ENCODE measurements at regions of chr11 and their contacts with region 1.

Region 1: GRCh38 chr11:70158201-70158600 is 44.9 kb upstream of the FADD start:
- DNase-seq: peak; percentile 82
- ATAC-seq: peak; percentile 95
- H3K4me3 Mint-ChIP-seq: no peak overlapping the region
- H3K27ac Mint-ChIP-seq: no peak overlapping the region
- H3K4me1 Mint-ChIP-seq: 0 out of 2 replicates have a peak, but pooled peaks cover 2% of the 10 kb centered on the region
- H3K27me3 Mint-ChIP-seq: no peaks in the 10 kb centered on the region
- CTCF ChIP-seq: 0 out of 2 replicates have a peak, but pooled peaks have one; percentile 15

Region 2: DNA sequence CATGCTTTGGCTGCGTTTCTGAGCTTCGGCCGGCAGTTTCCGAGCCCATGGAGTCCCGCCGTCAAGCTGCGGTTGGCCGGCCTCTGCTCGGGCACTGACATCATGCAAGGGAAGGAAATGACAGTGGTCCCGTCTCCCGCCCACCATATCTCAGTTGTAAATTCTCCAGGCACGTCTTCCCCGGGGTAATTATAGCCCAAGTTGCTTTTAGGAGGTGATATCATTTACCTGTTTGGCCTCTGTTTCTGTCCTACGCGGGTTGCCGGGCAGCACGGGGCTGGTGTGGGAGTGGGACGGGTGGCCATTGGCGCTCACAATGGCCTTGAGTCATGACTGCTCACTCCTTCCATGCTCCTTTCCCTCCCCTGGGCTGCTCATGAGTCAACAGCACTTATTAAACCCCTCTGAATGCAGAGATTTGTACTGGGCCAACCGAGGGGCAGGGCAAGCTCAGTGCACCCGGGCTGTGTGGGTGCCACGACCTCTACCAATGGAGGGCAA is 84.3 kb before region 1 on chr11:
- CTCF ChIA-PET with region 1: interaction called, 15 read pairs
- POLR2A ChIA-PET with region 1: interaction called, 3 read pairs
- DNase-seq: no peak
- ATAC-seq: peak; percentile 11; the same call in 1 of the 2 replicates
- H3K4me3 Mint-ChIP-seq: no peak overlapping the region
- H3K27ac Mint-ChIP-seq: no peak overlapping the region
- H3K4me1 Mint-ChIP-seq: peaks cover 45% of the 10 kb centered on the region
- H3K27me3 Mint-ChIP-seq: peaks cover 52% of the 10 kb centered on the region
- CTCF ChIP-seq: no peak

Region 3: GRCh38 chr11:70082829-70083228 is 75.4 kb before region 1 on chr11:
- CTCF ChIA-PET with region 1: interaction called, 23 read pairs
- POLR2A ChIA-PET with region 1: no interaction called
- DNase-seq: no peak
- ATAC-seq: no peak
- H3K4me3 Mint-ChIP-seq: no peak overlapping the region
- H3K27ac Mint-ChIP-seq: no peak overlapping the region
- H3K4me1 Mint-ChIP-seq: peaks cover 3% of the 10 kb centered on the region; the same call in 1 of the 2 replicates
- H3K27me3 Mint-ChIP-seq: peaks cover 29% of the 10 kb centered on the region
- CTCF ChIP-seq: no peak

Region 4: GRCh38 chr11:70141486-70142220 is 16.5 kb before region 1 on chr11:
- CTCF ChIA-PET with region 1: interaction called, 30 read pairs
- POLR2A ChIA-PET with region 1: interaction called, 3 read pairs
- DNase-seq: no peak
- ATAC-seq: peak; percentile 41
- H3K4me3 Mint-ChIP-seq: peak overlapping the region; percentile 57
- H3K27ac Mint-ChIP-seq: no peak overlapping the region
- H3K4me1 Mint-ChIP-seq: peaks cover 38% of the 10 kb centered on the region
- H3K27me3 Mint-ChIP-seq: peaks cover 28% of the 10 kb centered on the region
- CTCF ChIP-seq: no peak

Region 5: DNA sequence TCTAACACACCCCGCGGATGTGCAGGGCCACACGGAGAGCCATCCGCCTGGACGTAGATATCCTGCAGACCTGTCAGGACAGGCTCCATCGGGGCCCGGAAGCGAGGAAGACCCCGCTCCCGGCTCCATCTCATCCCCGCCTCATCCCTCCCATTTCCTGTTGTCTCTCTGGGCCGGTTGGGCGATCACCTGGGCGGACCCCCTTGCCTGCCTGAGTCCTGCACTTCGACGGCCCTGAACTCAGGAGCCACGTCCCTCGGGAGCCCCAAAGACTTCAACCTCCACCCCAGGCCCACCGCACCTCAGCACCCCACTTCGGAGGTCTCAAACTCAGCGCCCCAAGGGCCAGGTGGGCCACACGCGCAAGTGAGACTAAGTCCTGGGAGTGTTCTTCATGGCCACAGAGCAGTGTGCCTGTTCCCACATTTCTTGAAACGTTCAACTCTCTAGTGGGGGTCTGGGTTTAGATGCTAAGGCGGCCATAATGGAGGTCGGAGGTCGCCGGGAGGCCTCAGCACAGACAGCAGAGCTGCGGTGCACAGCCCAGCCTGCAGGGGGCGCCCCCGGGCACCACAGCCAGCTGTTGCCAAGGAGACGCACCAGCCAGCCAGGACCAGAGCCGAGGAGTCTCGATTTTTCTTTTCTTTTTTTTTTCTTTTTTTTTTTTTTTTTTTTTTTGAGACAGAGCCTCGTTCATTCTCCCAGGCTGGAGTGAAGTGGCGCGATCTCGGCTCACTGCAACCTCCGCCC is 18.9 kb after region 1 on chr11:
- CTCF ChIA-PET with region 1: interaction called, 15 read pairs
- POLR2A ChIA-PET with region 1: no interaction called
- DNase-seq: peak; percentile 90
- ATAC-seq: peak; percentile 75
- H3K4me3 Mint-ChIP-seq: no peak overlapping the region
- H3K27ac Mint-ChIP-seq: no peak overlapping the region
- H3K4me1 Mint-ChIP-seq: peaks cover 24% of the 10 kb centered on the region
- H3K27me3 Mint-ChIP-seq: no peaks in the 10 kb centered on the region
- CTCF ChIP-seq: peak; percentile 90

Measured in WTC11 (cell line).